Psoas muscle (tissue), 8 donors: ENCODE measurements at regions of chr10 and their contacts with region 1.

Region 1: DNA sequence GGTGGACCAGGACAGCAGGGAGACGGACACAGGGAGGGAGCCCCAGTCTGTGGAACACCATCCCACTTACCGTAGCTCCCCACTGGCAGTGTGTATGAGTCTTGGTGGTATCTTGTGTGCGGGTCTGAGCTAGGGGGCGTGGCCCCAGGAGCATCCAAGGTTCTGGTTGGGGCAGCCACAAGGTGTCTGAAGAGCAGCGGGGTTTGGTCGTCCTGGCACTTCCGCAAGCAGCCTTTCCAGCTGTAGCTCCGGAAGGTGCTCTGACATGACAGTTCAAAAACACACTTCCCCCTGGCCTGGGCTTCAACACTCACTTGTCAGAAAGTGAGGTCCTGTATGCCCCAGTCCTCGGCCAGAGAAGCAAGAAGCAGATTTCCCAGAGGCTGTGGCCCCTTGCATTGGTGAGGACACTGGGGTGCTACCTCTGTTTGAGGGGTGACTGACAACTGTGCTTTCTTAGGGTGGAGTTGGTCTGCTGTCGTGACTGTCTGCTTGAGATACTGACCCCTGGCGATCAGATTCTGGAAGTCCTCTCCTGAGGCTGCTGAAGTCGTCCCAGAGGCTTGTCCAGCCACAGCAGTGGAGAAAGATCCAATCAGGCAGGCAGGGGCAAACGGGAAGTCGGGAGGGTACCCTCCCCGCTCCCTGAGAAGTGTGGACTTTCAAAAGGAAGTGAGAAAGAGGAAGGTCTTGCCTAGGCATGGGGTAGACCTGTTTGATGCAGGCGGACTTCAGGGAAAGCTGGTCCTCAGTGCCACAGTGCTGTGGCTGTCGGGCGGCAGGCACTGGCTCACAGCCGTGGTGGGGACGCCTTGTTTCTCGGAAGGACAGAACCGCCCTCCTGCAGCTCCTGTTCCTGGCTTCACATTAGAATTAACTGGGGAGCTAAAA is 51.4 kb upstream of the PFKFB3 start:
- DNase-seq: peak; percentile 45 to 76
- ATAC-seq: peak; percentile 56 to 85 (median 74)
- H3K4me3 ChIP-seq: peak overlapping the region; percentile 40
- H3K27ac ChIP-seq: peak overlapping the region; percentile 56
- H3K4me1 ChIP-seq: peaks cover 39% of the 10 kb centered on the region
- H3K27me3 ChIP-seq: no peaks in the 10 kb centered on the region
- CTCF ChIP-seq: peak; percentile 65

Region 2: GRCh38 chr10:6108603-6109443 is 42.5 kb before region 1 on chr10:
- intact Hi-C with region 1: loop called (anchors 2 to 5 kb)
- DNase-seq: no peak
- ATAC-seq: peak; percentile 39 to 61 (median 57)
- H3K4me3 ChIP-seq: no peak overlapping the region
- H3K27ac ChIP-seq: peak overlapping the region; percentile 12
- H3K4me1 ChIP-seq: peaks cover 16% of the 10 kb centered on the region
- H3K27me3 ChIP-seq: no peaks in the 10 kb centered on the region
- CTCF ChIP-seq: peak; percentile 82

Region 3: GRCh38 chr10:6300106-6300783 is 148.9 kb after region 1 on chr10:
- intact Hi-C with region 1: no loop called
- DNase-seq: no peak
- ATAC-seq: no peak
- H3K4me3 ChIP-seq: no peak overlapping the region
- H3K27ac ChIP-seq: no peak overlapping the region
- H3K4me1 ChIP-seq: no peaks in the 10 kb centered on the region
- H3K27me3 ChIP-seq: no peaks in the 10 kb centered on the region
- CTCF ChIP-seq: no peak